Head of caudate nucleus (tissue), 42 donors: ENCODE measurements at regions of chr1 and their contacts with region 1.

Region 1: GRCh38 chr1:155044812-155045690 is 6.1 kb upstream of the ADAM15 start:
- DNase-seq: peak; percentile 63 to 93 (median 83)

Region 2: GRCh38 chr1:155084722-155085503 is 39.9 kb after region 1 on chr1:
- intact Hi-C with region 1: loop called (anchors 1 kb)
- DNase-seq: peak; percentile 88 to 97 (median 94)

Region 3: DNA sequence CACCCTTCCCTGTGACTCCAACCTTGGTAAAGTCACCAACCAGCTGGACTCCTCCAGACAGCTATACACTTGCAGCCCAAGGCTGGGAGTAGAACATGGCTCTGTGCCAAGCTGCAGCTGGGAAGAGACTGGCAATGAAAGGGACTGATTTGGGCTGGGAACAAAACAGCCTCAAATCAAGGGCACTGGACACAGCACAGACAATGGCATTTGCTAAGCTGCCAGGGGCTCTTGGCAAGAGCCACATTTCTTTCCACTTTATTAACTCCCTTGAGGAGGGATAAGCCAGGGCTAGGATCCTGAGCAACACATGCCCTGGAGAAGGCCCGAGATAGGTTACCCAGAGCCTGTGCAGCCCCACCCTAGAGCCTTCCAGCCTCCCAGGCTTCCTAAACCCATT is 826.3 kb after region 1 on chr1:
- intact Hi-C with region 1: no loop called
- DNase-seq: peak; percentile 79 to 98 (median 93)